ENCODE measurements at regions of chr1 and their contacts with region 1.

Region 1: GRCh38 chr1:35298464-35298863 is 30.0 kb downstream of the ZMYM4 start:
- DNase-seq: peak in 11 of 14 experiments; percentile 1 to 70 (median 10)
- ATAC-seq: peak; percentile 94
- H3K4me3 ChIP-seq: no peak overlapping the region
- H3K4me3 Mint-ChIP-seq: no peak overlapping the region
- H3K27ac ChIP-seq: no peak overlapping the region
- H3K27ac Mint-ChIP-seq: no peak overlapping the region
- H3K4me1 ChIP-seq: no peaks in the 10 kb centered on the region
- H3K4me1 Mint-ChIP-seq: peaks cover 11% of the 10 kb centered on the region
- H3K27me3 ChIP-seq: no peaks in the 10 kb centered on the region
- H3K27me3 Mint-ChIP-seq: no peaks in the 10 kb centered on the region
- CTCF ChIP-seq: peak; percentile 63

Region 2: DNA sequence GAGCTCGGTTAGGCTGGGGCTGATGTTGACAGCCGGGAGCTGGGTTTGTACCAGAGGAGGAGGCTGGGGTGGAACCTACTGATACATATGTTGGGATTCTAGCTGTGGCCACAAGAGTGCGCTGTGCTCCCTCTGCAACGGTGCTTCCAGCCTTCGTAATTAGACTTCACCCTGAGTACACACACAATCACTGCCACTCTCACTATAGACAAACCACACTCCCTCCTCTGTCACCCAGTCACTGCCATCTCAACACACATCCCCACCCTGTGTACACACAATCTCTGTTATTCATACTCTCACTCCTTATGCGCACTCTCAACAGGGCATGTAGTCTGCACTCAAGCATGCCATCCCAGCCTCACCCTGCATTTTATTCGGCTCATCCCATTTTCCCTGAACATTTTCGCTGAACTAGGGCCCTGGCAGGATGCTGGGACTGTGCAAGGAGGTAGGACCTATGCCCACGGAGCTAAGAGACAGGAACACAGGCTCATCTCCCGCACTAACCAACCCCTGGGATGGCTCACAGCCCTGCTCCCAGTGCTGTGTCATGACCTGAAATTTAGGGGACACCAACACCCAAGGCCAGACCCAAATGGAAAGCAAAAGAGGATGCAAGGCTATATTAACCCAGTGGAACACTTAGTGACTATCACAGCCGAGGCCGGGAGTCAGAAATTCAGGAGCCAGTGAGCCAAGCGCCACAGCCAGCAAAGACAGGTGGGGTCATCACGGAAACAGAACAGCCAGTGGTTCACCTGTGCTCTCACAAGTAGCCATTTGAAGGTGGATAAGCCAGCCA is 511.7 kb before region 1 on chr1:
- CTCF ChIA-PET with region 1: no interaction called
- POLR2A ChIA-PET with region 1: no interaction called
- intact Hi-C with region 1: loop called (anchors 1 to 2 kb)
- DNase-seq: peak; percentile 29 to 78 (median 48)
- ATAC-seq: peak; percentile 84
- H3K4me3 ChIP-seq: no peak overlapping the region
- H3K4me3 Mint-ChIP-seq: no peak overlapping the region
- H3K27ac ChIP-seq: no peak overlapping the region
- H3K27ac Mint-ChIP-seq: no peak overlapping the region
- H3K4me1 ChIP-seq: peaks cover 5% of the 10 kb centered on the region
- H3K4me1 Mint-ChIP-seq: peaks cover 5% of the 10 kb centered on the region
- H3K27me3 ChIP-seq: peaks cover 14 to 36% of the 10 kb centered on the region in 2 experiments
- H3K27me3 Mint-ChIP-seq: peaks cover 58% of the 10 kb centered on the region
- CTCF ChIP-seq: peak; percentile 73

Region 3: DNA sequence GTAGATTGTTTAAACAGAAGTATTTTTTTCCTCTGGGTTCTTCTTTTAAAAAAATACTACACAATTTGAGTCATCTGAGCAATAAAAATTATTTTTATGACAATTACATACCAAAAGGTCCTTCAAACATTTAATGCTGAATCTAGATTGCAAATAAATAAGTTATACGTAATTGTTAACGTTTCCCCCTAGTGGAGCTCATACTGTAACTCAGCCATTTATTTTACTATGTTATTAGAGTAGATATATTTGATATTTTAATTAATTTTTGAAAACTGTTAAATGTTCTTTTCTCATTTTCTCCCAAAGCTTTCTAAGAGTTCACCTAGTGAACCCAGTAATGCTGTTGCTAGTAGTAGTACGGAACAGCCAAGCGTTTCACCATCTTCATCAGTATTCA is 185.8 kb before region 1 on chr1:
- CTCF ChIA-PET with region 1: no interaction called
- POLR2A ChIA-PET with region 1: no interaction called
- intact Hi-C with region 1: loop called in 1 of 2 experiments (anchors 10 kb)
- DNase-seq: no peak
- ATAC-seq: no peak
- H3K4me3 ChIP-seq: no peak overlapping the region
- H3K4me3 Mint-ChIP-seq: no peak overlapping the region
- H3K27ac ChIP-seq: no peak overlapping the region
- H3K27ac Mint-ChIP-seq: no peak overlapping the region
- H3K4me1 ChIP-seq: peaks cover 4% of the 10 kb centered on the region
- H3K4me1 Mint-ChIP-seq: peaks cover 12% of the 10 kb centered on the region
- H3K27me3 ChIP-seq: no peaks in the 10 kb centered on the region
- H3K27me3 Mint-ChIP-seq: no peaks in the 10 kb centered on the region
- CTCF ChIP-seq: no peak

Region 4: DNA sequence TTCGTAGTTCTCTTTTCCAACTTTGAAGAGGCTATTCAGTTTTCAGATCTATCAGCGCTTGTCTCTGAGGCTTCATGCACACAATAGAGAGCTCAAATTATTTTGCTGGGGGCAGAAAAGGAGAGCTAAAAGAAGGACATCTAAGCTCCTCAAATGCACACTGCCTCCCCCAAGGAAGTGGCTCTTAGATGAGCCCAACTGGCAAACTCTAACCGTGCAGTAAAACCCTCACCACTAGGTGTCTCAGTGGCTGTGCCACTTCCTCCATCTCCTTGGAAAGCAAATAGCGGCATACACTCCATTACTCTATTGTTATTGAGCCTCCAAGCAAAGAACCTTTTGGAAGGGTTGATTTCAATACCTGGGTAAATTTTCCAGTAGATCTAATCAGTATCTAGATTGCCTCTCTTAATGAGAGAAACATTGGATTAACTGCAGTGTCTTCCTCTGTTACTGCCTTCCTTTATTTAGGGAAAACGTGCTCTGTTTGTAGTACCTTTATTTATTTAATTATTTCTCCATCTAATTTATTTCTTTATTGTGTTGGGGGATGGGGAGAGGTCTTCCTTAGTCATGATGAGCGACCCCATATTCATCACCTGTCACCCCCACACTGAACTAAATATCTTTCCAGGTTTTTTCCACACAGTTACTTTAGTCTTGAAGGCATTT is 96.3 kb before region 1 on chr1:
- CTCF ChIA-PET with region 1: interaction called, 12 read pairs
- POLR2A ChIA-PET with region 1: no interaction called
- intact Hi-C with region 1: loop called (anchors 1 kb)
- DNase-seq: peak; percentile 49 to 87 (median 62)
- ATAC-seq: peak; percentile 100
- H3K4me3 ChIP-seq: no peak overlapping the region
- H3K4me3 Mint-ChIP-seq: no peak overlapping the region
- H3K27ac ChIP-seq: no peak overlapping the region
- H3K27ac Mint-ChIP-seq: no peak overlapping the region
- H3K4me1 ChIP-seq: no peaks in the 10 kb centered on the region
- H3K4me1 Mint-ChIP-seq: peaks cover 9% of the 10 kb centered on the region
- H3K27me3 ChIP-seq: no peaks in the 10 kb centered on the region
- H3K27me3 Mint-ChIP-seq: no peaks in the 10 kb centered on the region
- CTCF ChIP-seq: peak; percentile 88

Region 5: GRCh38 chr1:35243691-35244090 is 54.8 kb before region 1 on chr1:
- CTCF ChIA-PET with region 1: no interaction called
- POLR2A ChIA-PET with region 1: no interaction called
- intact Hi-C with region 1: no loop called
- DNase-seq: peak in 2 of 14 experiments; percentile 29 to 31
- ATAC-seq: no peak
- H3K4me3 ChIP-seq: no peak overlapping the region
- H3K4me3 Mint-ChIP-seq: no peak overlapping the region
- H3K27ac ChIP-seq: no peak overlapping the region
- H3K27ac Mint-ChIP-seq: no peak overlapping the region
- H3K4me1 ChIP-seq: no peaks in the 10 kb centered on the region
- H3K4me1 Mint-ChIP-seq: no peaks in the 10 kb centered on the region
- H3K27me3 ChIP-seq: no peaks in the 10 kb centered on the region
- H3K27me3 Mint-ChIP-seq: no peaks in the 10 kb centered on the region
- CTCF ChIP-seq: no peak

Region 6: DNA sequence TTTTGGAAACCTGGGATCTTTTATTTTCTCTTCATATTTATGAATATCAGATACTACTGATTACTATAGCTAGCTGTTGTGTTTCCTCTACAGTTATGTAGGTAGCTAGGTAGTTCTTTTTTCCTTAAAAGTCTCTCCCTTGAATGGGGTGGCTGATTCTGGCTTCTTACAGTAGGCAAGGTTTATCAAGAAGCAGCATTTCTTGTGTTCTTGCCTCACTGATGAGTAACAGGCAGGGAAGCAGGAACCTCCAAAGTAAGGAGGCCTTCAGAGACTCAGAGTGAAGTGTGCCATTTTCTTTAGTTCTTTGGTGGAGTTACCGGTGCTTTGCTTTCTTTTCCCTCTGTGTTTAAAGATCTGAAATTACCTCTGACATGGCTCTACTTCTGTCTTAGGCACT is 26.0 kb after region 1 on chr1:
- CTCF ChIA-PET with region 1: no interaction called
- POLR2A ChIA-PET with region 1: no interaction called
- intact Hi-C with region 1: no loop called
- DNase-seq: no peak
- ATAC-seq: no peak
- H3K4me3 ChIP-seq: no peak overlapping the region
- H3K4me3 Mint-ChIP-seq: no peak overlapping the region
- H3K27ac ChIP-seq: no peak overlapping the region
- H3K27ac Mint-ChIP-seq: no peak overlapping the region
- H3K4me1 ChIP-seq: no peaks in the 10 kb centered on the region
- H3K4me1 Mint-ChIP-seq: peaks cover 33% of the 10 kb centered on the region
- H3K27me3 ChIP-seq: no peaks in the 10 kb centered on the region
- H3K27me3 Mint-ChIP-seq: no peaks in the 10 kb centered on the region
- CTCF ChIP-seq: no peak

Measured in CD4-positive, alpha-beta T cell (primary cell).